Activated naive CD4-positive, alpha-beta T cell treated with anti-CD3 and anti-CD28 coated beads for 36 hours (primary cell): ENCODE measurements at regions of chr10 and their contacts with region 1.

Region 1: GRCh38 chr10:7192831-7193361 is 217.9 kb downstream of the SFMBT2 start:
- DNase-seq: peak; percentile 79
- H3K4me3 Mint-ChIP-seq: peak overlapping the region; percentile 56
- H3K27ac Mint-ChIP-seq: peak overlapping the region; percentile 88
- H3K4me1 Mint-ChIP-seq: peaks cover 74% of the 10 kb centered on the region
- H3K27me3 Mint-ChIP-seq: no peaks in the 10 kb centered on the region

Region 2: GRCh38 chr10:7239312-7239985 is 46.6 kb after region 1 on chr10:
- CTCF ChIA-PET with region 1: no interaction called
- intact Hi-C with region 1: loop called (anchors 1 kb)
- DNase-seq: peak; percentile 63
- H3K4me3 Mint-ChIP-seq: no peak overlapping the region
- H3K27ac Mint-ChIP-seq: no peak overlapping the region
- H3K4me1 Mint-ChIP-seq: peaks cover 35% of the 10 kb centered on the region
- H3K27me3 Mint-ChIP-seq: no peaks in the 10 kb centered on the region